Mammary epithelial cell (primary cell): ENCODE measurements at regions of chr16 and their contacts with region 1.

Region 1: GRCh38 chr16:69890114-69890891 is 60.8 kb upstream of the CLEC18A start:
- DNase-seq: peak; percentile 27
- H3K4me3 ChIP-seq: no peak overlapping the region
- H3K27ac ChIP-seq: no peak overlapping the region
- H3K4me1 ChIP-seq: peaks cover 4% of the 10 kb centered on the region
- H3K27me3 ChIP-seq: no peaks in the 10 kb centered on the region
- CTCF ChIP-seq: no peak

Region 2: DNA sequence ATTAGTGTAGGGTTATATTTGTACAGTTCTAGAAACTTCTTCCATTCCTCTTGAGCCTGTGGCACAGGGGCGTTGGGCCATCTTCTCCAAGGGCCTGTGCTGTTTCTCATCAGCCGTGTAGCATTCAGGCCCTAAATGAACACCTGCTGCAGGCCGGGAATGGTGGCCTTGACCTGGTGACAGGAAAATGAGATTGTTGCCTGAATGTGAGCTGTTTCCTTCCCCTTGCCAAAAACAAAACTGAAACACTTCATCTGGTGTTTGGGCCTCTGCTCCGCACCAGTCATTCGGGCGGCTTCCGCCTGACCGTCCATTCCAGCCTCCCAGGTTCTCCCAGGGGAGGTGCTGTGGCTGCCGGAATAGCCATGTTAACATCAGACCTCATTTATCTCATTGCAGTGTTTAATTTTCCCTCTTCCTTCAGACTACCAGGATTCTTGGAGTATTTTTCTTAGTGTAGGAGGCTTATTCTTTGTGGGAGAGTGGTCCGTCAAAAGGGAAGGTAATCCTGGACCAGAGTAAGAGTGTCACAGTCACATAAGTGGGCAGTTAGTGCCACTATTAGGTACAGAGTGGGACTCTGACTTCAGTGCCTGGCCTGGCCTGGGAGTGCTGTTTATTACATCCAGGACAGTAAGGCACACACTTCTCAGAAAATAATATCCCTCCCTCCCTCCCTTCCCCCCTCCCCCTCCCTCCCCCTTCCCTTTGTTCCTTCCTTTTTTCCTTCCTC is 66.3 kb before region 1 on chr16:
- CTCF ChIA-PET with region 1: no interaction called
- dilution Hi-C with region 1: loop called (anchors 5 kb)
- in situ Hi-C with region 1: no loop called
- intact Hi-C with region 1: no loop called
- DNase-seq: no peak
- H3K4me3 ChIP-seq: no peak overlapping the region
- H3K27ac ChIP-seq: no peak overlapping the region
- H3K4me1 ChIP-seq: peaks cover 7% of the 10 kb centered on the region
- H3K27me3 ChIP-seq: no peaks in the 10 kb centered on the region
- CTCF ChIP-seq: no peak

Region 3: GRCh38 chr16:69848637-69849545 is 41.4 kb before region 1 on chr16:
- CTCF ChIA-PET with region 1: no interaction called
- dilution Hi-C with region 1: no loop called
- in situ Hi-C with region 1: no loop called
- intact Hi-C with region 1: no loop called
- DNase-seq: peak; percentile 50
- H3K4me3 ChIP-seq: no peak overlapping the region
- H3K27ac ChIP-seq: no peak overlapping the region
- H3K4me1 ChIP-seq: no peaks in the 10 kb centered on the region
- H3K27me3 ChIP-seq: no peaks in the 10 kb centered on the region
- CTCF ChIP-seq: no peak

Region 4: DNA sequence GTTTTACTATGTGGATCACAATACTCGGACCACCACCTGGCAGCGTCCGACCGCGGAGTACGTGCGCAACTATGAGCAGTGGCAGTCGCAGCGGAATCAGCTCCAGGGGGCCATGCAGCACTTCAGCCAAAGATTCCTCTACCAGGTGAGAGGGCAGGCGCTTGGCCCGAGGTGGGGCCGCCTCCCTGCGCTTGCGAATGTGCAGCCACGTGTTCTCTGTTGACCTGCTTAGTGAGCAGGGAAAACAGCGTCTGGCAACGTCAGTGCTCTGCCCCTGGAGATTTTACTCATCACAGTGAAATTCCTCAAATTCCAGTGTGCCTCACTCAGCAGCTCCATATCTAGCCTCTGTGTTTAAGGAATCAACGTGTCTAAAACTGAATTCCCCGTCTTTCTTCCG is 27.4 kb after region 1 on chr16:
- CTCF ChIA-PET with region 1: no interaction called
- dilution Hi-C with region 1: no loop called
- in situ Hi-C with region 1: no loop called
- intact Hi-C with region 1: no loop called
- DNase-seq: peak; percentile 89
- H3K4me3 ChIP-seq: peak overlapping the region; percentile 32 to 42 (median 36)
- H3K27ac ChIP-seq: peak overlapping the region; percentile 83
- H3K4me1 ChIP-seq: peaks cover 16% of the 10 kb centered on the region
- H3K27me3 ChIP-seq: no peaks in the 10 kb centered on the region
- CTCF ChIP-seq: no peak